GM12878 (cell line): ENCODE measurements at regions of chr7 and their contacts with region 1.

Region 1: GRCh38 chr7:1137510-1138167 is 22.4 kb downstream of the ZFAND2A start:
- DNase-seq: no peak
- ATAC-seq: peak; percentile 85
- H3K4me3 ChIP-seq: peak overlapping the region; percentile 83
- H3K27ac ChIP-seq: peak overlapping the region; percentile 46
- H3K4me1 ChIP-seq: no peaks in the 10 kb centered on the region; the same call in 1 of the 2 replicates
- H3K27me3 ChIP-seq: no peaks in the 10 kb centered on the region
- CTCF ChIP-seq: no peak
- EP300 ChIP-seq: no peak; a peak in 1 of 4 replicates
- POLR2A ChIP-seq: no peak
- RAD21 ChIP-seq: no peak

Region 2: DNA sequence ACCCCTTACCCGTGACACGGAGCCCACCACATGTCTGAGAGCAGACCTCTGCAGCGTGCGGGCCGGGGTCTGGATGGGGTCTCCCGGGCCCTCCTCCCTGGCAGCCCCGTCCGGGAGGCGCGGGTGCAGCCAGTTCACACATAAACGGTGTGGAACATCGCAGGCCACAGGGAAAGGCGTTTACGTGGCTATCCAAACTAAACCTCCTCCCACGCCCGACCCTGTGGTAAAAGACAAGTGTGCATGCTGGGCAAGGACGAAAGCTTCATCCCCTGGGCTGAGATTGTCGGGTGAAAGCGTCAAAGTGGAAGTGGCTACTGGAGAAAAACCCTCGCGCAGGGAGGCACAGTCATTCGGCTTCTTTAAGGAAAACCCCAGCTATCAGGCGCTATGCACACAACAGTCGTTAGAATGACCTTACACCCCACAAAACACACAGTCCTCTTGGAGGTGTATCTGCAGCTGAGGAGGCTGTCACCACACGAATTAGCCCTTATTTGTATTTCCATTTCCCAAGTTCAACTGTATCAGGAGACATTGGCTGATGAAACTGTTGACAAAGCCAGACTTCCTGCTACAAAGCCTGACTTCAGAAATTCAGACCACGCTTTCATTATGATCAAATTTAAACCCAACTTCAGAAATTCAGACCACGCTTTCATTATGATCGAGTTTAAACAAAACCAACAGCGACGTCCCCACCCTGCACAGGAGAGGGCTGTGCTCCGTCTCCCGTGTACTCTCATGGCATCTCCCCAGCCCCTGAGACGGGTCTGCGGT is 34.4 kb before region 1 on chr7:
- CTCF ChIA-PET with region 1: interaction called, 21 read pairs
- POLR2A ChIA-PET with region 1: interaction called, 36 read pairs
- RAD21 ChIA-PET with region 1: interaction called, 21 read pairs
- SMC1A ChIA-PET with region 1: interaction called, 29 read pairs
- in situ Hi-C with region 1: no loop called
- intact Hi-C with region 1: loop called (anchors 1 kb)
- DNase-seq: peak; percentile 73
- ATAC-seq: peak; percentile 79
- H3K4me3 ChIP-seq: peak overlapping the region; percentile 64
- H3K27ac ChIP-seq: peak overlapping the region; percentile 70
- H3K4me1 ChIP-seq: peaks cover 33% of the 10 kb centered on the region
- H3K27me3 ChIP-seq: no peaks in the 10 kb centered on the region
- CTCF ChIP-seq: no peak
- EP300 ChIP-seq: peak; percentile 38 to 78; a peak in 3 of 4 replicates
- POLR2A ChIP-seq: peak; percentile 62; the same call in 1 of the 2 replicates
- RAD21 ChIP-seq: no peak

Region 3: GRCh38 chr7:1159891-1160668 is 22.4 kb after region 1 on chr7 and contains the start of gene ZFAND2A:
- CTCF ChIA-PET with region 1: interaction called, 4 read pairs
- POLR2A ChIA-PET with region 1: interaction called, 11 read pairs
- RAD21 ChIA-PET with region 1: no interaction called
- SMC1A ChIA-PET with region 1: interaction called, 5 read pairs
- in situ Hi-C with region 1: no loop called
- intact Hi-C with region 1: no loop called
- DNase-seq: peak; percentile 79
- ATAC-seq: peak; percentile 98
- H3K4me3 ChIP-seq: peak within 1 kb of the TSS; percentile 99
- H3K27ac ChIP-seq: peak within 1 kb of the TSS; percentile 96
- H3K4me1 ChIP-seq: no peaks in the 10 kb centered on the region; the same call in 1 of the 2 replicates
- H3K27me3 ChIP-seq: no peaks in the 10 kb centered on the region
- CTCF ChIP-seq: no peak
- EP300 ChIP-seq: no peak; a peak in 1 of 4 replicates
- POLR2A ChIP-seq: peak; percentile 93
- RAD21 ChIP-seq: no peak
- polyA plus RNA-seq, gene ZFAND2A: 34.9 to 39.9 TPM

Region 4: DNA sequence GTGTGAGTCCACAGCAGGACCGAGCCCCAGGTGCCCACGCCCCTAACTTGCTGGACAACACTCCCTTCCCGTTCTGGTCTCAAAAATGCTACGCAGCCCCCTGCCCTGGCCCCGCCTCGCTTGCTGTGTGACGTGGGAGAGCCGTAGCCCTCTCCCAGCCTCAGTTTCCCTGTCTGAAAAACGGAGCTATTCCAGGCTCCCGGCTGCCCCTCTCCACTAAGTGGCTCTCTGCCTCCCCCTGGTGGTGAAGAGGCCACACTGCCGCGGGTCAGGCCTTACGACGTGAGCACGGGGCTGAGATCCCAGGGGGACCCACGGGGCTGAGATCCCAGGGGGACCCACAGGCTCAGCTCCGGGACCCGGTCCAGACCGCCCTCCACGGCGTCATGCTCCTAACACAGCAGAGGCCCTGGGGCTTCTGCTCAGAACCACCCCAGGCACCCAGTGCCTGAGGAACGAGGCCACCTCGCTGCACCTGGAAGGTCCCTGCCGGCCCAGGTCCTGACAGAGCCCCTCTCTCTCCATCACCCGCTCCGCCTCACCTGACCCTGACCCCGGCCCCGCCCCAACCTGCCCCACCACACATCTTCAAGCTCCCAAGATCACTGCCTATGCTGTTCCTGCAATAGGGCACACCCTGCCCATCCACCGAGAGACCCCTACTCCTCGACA is 294.9 kb after region 1 on chr7:
- CTCF ChIA-PET with region 1: no interaction called
- POLR2A ChIA-PET with region 1: no interaction called
- RAD21 ChIA-PET with region 1: no interaction called
- SMC1A ChIA-PET with region 1: no interaction called
- in situ Hi-C with region 1: no loop called
- intact Hi-C with region 1: no loop called
- DNase-seq: no peak
- ATAC-seq: peak; percentile 94
- H3K4me3 ChIP-seq: no peak overlapping the region
- H3K27ac ChIP-seq: no peak overlapping the region
- H3K4me1 ChIP-seq: no peaks in the 10 kb centered on the region
- H3K27me3 ChIP-seq: no peaks in the 10 kb centered on the region; a peak in 1 of 4 replicates
- CTCF ChIP-seq: peak; percentile 92 to 97 (median 97)
- EP300 ChIP-seq: no peak
- POLR2A ChIP-seq: no peak
- RAD21 ChIP-seq: peak; percentile 88